ENCODE measurements at regions of chr19 and their contacts with region 1.

Region 1: DNA sequence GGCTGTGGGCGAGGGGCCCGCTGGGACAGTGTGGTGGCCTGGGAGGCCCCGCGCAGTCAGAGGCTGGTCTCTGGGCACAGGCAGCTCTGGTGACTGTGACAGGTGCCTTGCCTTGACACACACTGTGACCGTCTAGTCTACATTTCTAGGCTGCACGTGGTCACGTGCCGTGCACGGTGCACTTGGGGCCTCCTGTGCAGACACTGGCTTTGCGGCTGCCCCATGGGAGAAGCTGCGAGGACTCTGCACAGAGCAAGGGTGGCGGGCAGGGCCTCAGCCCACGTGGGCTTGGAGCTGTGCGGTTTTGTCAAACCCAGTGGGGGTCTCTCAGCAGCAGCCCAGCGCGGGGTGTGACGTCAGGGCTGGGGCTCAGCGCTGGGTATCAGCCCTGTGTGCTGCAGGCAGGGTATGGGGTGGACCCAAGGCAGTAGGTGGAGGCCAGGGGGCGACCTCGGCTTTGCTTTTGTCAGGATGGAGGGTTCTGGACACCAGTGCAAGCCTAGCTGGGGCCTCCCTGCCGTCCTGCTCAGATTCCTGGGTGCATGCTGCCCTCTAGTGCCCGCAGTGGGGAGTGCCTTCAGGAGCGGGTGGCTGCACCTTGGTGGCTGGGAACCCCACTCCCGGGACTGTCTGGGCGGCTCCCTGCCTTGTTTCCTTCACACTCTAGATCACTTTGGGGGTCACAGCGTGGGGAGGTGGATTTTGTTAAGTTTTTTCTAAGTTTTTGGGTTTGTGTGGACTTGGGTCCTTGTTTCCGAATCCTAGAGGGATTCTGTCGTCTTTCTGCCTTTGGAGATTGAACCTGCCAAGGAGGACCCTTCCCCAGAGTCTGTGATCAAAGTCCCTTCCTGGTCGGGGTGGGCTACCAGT is 62.6 kb downstream of the KDM4B start:
- DNase-seq: peak; percentile 96
- ATAC-seq: peak; percentile 88
- H3K4me3 Mint-ChIP-seq: no peak overlapping the region
- H3K27ac Mint-ChIP-seq: no peak overlapping the region
- H3K4me1 Mint-ChIP-seq: peaks cover 2% of the 10 kb centered on the region; the same call in 1 of the 2 replicates
- H3K27me3 Mint-ChIP-seq: no peaks in the 10 kb centered on the region
- CTCF ChIP-seq: peak; percentile 91

Region 2: DNA sequence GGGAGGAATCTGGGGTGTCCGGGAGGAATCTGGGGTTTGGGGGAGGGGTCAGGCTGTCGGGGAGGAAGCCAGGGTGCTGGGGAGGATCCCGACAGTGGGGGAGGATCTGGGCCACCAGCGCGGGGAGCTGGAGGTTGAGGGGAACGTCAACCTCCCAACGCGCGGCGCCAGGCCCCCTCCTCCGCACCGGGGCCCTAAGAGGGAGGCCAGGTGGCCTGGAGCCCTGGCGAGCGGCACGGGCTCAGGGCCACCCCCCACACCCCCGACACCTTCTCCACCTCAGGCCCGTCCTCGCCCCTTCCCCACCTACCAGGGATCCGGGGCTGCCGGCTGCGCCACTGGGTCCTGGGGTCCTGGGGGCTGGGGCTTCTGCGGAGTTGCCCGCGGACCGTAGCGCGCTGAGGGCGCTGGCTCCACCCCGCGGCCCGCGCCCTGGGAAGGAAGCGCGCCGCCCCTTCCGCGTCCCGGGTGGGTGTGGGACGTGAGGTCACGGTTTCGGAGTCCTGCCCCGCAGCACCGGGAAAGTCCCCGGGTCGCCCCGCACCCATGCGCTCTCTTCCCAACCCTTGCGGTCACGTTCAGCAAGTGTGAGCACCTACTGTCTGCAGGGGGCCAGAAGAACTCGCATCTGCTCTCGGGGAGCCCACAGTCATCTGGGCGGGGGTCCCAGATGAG is 200.0 kb before region 1 on chr19 and contains the start of gene TICAM1:
- CTCF ChIA-PET with region 1: no interaction called
- POLR2A ChIA-PET with region 1: no interaction called
- DNase-seq: no peak
- ATAC-seq: peak; percentile 50
- H3K4me3 Mint-ChIP-seq: peak within 1 kb of the TSS; percentile 62
- H3K27ac Mint-ChIP-seq: no peak within 1 kb of the TSS
- H3K4me1 Mint-ChIP-seq: no peaks in the 10 kb centered on the region
- H3K27me3 Mint-ChIP-seq: peaks cover 29% of the 10 kb centered on the region
- CTCF ChIP-seq: no peak
- total RNA-seq, gene TICAM1: 0.61 to 1.4 TPM (median 1.2 TPM) in 3 replicates

Region 3: DNA sequence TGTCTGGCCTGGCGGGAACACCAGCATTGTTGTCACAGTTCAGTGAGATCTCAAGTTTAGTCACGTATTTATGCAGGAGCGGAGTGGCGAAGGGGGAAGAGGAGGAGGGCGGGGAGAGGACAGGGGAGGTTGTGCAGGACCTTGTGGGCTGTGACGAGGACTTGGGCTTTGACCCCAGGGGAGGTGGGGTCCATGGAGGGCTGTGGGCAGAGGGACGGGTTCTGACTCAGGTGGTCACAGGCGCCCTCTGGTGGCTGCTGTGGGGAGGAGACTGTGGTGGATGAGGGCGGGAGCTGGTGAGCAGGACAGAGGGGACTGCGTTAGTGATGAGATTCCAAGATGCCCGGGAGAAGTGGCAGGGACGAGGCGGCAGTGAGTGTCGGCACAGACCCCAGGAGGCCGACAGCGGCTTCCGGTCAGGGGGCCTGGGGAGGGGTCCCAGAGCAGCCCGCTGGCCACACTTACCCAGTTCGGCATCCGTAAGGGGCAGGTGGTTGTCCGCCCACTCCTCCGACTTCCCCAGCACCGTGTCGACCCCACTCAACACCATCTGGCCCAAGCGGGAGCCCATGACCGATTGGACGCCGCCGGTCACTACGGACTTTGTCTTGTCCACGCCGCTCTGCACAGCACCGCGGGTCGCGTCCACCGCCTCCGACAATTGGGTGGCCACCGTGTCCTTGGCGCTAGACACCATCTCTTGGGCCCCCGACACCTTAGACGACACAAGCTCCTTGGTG is 179.7 kb before region 1 on chr19:
- CTCF ChIA-PET with region 1: interaction called, 13 read pairs
- POLR2A ChIA-PET with region 1: no interaction called
- DNase-seq: peak; percentile 92
- ATAC-seq: peak; percentile 99
- H3K4me3 Mint-ChIP-seq: no peak overlapping the region
- H3K27ac Mint-ChIP-seq: 0 out of 2 replicates have a peak overlapping the region, but pooled peaks have one; percentile 49
- H3K4me1 Mint-ChIP-seq: no peaks in the 10 kb centered on the region
- H3K27me3 Mint-ChIP-seq: no peaks in the 10 kb centered on the region
- CTCF ChIP-seq: peak; percentile 92

Region 4: DNA sequence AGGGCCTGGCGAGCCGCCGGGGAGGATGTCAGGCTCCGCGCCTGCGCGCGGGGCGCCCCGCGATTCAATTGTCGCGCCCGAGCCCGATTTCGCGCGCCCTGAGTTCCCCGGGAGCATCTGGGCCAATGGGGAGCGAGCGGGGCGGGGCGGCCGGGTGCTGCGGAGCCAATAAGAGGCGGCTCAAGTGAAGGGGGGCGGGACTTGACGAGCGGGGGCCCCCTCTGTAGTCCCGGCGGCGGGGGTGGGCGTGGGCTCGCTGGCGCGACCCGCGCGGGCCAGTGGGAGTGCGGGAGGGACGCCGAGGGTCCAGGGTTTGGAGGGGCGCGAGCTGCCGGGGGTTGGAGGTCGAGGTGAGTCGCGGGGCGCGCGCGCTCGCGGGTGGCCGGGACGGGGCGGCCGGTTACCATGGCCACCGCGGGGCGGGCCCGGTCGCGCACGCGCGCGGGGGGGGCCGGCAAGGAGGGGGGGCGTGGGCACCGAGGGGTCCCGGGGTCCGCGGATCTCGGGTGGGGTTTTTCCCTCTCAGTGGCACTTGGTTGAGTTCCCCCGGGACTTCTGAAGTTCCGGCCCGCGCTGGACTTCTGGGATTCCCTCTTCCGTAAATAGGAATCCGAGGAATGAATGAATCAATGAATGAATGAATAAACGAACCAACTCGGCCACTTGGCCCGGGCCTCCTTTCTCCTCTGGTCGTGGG is 121.4 kb before region 1 on chr19:
- CTCF ChIA-PET with region 1: interaction called, 17 read pairs
- POLR2A ChIA-PET with region 1: no interaction called
- DNase-seq: peak; percentile 92
- ATAC-seq: peak; percentile 86
- H3K4me3 Mint-ChIP-seq: peak overlapping the region; percentile 77
- H3K27ac Mint-ChIP-seq: no peak overlapping the region
- H3K4me1 Mint-ChIP-seq: peaks cover 22% of the 10 kb centered on the region
- H3K27me3 Mint-ChIP-seq: peaks cover 28% of the 10 kb centered on the region
- CTCF ChIP-seq: no peak

Region 5: GRCh38 chr19:4968462-4969291 is 62.8 kb before region 1 on chr19 and contains the start of gene KDM4B:
- CTCF ChIA-PET with region 1: interaction called, 23 read pairs
- POLR2A ChIA-PET with region 1: no interaction called
- DNase-seq: peak; percentile 99
- ATAC-seq: peak; percentile 94
- H3K4me3 Mint-ChIP-seq: peak within 1 kb of the TSS; percentile 96
- H3K27ac Mint-ChIP-seq: peak within 1 kb of the TSS; percentile 83
- H3K4me1 Mint-ChIP-seq: peaks cover 42% of the 10 kb centered on the region
- H3K27me3 Mint-ChIP-seq: no peaks in the 10 kb centered on the region
- CTCF ChIP-seq: no peak
- total RNA-seq, gene KDM4B: 43.2 to 56.0 TPM (median 53.1 TPM) in 3 replicates

Region 6: GRCh38 chr19:5001615-5002014 is 29.9 kb before region 1 on chr19:
- CTCF ChIA-PET with region 1: interaction called, 49 read pairs
- POLR2A ChIA-PET with region 1: no interaction called
- DNase-seq: peak; percentile 66
- ATAC-seq: peak; percentile 78
- H3K4me3 Mint-ChIP-seq: no peak overlapping the region
- H3K27ac Mint-ChIP-seq: 0 out of 2 replicates have a peak overlapping the region, but pooled peaks have one; percentile 43
- H3K4me1 Mint-ChIP-seq: peaks cover 3% of the 10 kb centered on the region; the same call in 1 of the 2 replicates
- H3K27me3 Mint-ChIP-seq: no peaks in the 10 kb centered on the region
- CTCF ChIP-seq: peak; percentile 44

Region 7: DNA sequence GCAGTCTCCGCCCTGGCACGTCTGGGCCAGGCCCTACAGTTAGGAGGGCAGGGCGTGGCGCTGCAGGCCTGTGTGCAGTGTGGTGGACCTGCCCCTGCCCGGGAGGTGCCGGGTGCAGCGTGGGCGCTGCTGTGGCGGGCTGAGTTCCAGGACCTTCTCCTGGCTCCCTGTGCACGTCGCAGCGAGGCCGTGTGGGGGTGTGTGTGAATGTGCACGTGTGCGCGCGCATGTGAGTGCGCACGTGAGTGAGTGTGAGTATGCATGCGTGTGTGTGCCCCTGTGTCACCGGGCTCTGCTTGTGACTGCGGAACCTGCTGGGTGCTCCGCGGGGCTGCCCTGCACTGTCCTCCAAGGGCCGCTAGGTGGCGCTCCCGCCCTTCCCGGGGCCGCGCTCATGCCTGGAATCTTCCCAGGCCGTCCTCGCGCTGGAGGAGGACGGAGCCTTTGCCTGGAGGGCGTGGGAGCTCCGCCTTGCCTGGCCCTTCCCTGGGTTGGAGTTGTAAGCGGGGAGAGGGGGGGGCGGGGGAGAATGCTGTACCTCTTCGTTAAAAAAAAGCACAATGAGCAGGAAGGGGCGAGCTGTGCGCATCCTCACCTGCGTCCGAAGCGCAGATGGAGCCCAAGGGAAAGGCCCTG is 16.7 kb after region 1 on chr19:
- CTCF ChIA-PET with region 1: interaction called, 13 read pairs
- POLR2A ChIA-PET with region 1: no interaction called
- DNase-seq: peak; percentile 92
- ATAC-seq: peak; percentile 88
- H3K4me3 Mint-ChIP-seq: no peak overlapping the region
- H3K27ac Mint-ChIP-seq: no peak overlapping the region
- H3K4me1 Mint-ChIP-seq: no peaks in the 10 kb centered on the region
- H3K27me3 Mint-ChIP-seq: no peaks in the 10 kb centered on the region
- CTCF ChIP-seq: peak; percentile 99